Caco-2 (cell line): ENCODE measurements at regions of chr12 and their contacts with region 1.

Region 1: GRCh38 chr12:10212201-10213131 is at the start of gene GABARAPL1:
- DNase-seq: peak; percentile 97 to 98
- H3K4me3 ChIP-seq: peak within 1 kb of the TSS; percentile 92
- H3K4me3 Mint-ChIP-seq: peak within 1 kb of the TSS; percentile 80
- H3K27ac Mint-ChIP-seq: peak within 1 kb of the TSS; percentile 99
- H3K4me1 ChIP-seq: peaks cover 24% of the 10 kb centered on the region
- H3K4me1 Mint-ChIP-seq: peaks cover 28% of the 10 kb centered on the region
- H3K27me3 ChIP-seq: no peaks in the 10 kb centered on the region
- H3K27me3 Mint-ChIP-seq: no peaks in the 10 kb centered on the region
- CTCF ChIP-seq: no peak
- total RNA-seq, gene GABARAPL1: 106 TPM in 2 replicates

Region 2: DNA sequence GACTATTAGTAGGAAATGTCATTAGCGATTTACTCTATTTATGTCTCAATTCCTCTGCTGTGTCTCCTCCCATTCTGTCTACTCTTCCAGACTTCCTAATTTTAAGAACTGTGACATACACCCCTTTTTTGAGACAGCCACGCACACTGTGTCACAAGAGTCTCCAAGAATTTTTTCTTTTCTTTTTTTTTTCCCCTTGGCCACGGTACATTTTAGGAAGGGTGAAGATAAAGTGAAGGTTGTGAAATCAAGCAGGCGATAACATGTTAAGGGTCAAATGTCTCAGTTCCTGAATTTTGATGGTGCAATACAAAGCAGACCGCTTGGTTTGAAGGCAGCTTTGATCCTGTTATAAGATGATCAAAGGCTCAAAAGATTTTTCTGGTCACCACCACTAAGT is 44.9 kb before region 1 on chr12:
- CTCF ChIA-PET with region 1: no interaction called
- POLR2A ChIA-PET with region 1: interaction called, 12 read pairs
- intact Hi-C with region 1: loop called (anchors 1 kb)
- DNase-seq: peak; percentile 71 to 86
- H3K4me3 ChIP-seq: no peak overlapping the region
- H3K4me3 Mint-ChIP-seq: peak overlapping the region; percentile 25
- H3K27ac Mint-ChIP-seq: peak overlapping the region; percentile 73
- H3K4me1 ChIP-seq: peaks cover 76% of the 10 kb centered on the region
- H3K4me1 Mint-ChIP-seq: peaks cover 43% of the 10 kb centered on the region
- H3K27me3 ChIP-seq: no peaks in the 10 kb centered on the region
- H3K27me3 Mint-ChIP-seq: no peaks in the 10 kb centered on the region
- CTCF ChIP-seq: no peak

Region 3: DNA sequence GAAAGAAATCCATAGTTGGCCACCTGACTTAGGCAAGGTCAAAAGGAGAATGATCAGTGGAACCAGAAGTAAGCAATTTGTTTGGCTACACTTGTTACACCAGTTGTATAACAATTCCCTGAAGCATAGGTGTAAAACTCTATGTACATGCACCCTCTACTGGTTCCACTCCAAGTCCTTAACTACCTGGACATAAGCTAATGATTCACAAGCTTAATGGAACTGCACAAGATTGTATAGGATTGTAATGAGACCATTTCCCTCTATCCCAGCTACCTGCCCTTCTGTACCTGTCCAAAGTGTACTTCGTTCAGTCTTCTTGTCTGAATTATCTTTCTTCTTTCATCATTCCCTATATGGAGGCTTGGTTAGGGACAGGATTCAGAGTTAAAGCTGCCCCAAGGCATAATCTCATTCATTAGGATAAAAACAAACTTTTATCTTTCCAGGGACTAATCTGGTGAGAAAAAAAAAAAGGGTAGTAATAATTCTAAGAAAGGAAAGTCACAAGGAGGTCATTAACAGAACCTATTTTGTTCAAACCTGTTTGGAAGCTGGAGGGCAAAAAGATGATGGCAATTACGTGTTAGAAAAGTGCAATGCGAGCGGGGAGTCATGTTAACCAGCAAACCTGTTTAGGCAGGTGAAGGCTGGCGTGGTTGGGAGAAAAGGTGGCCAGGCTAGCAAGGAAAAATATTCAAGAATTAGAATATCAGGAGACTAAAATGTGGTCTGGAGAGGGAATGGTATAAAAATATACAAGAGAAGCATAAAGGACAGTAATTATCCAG is 36.4 kb before region 1 on chr12:
- CTCF ChIA-PET with region 1: interaction called, 6 read pairs
- POLR2A ChIA-PET with region 1: interaction called, 12 read pairs
- intact Hi-C with region 1: no loop called
- DNase-seq: peak; percentile 58 to 68
- H3K4me3 ChIP-seq: no peak overlapping the region
- H3K4me3 Mint-ChIP-seq: peak overlapping the region; percentile 18
- H3K27ac Mint-ChIP-seq: peak overlapping the region; percentile 77
- H3K4me1 ChIP-seq: peaks cover 91% of the 10 kb centered on the region
- H3K4me1 Mint-ChIP-seq: peaks cover 52% of the 10 kb centered on the region
- H3K27me3 ChIP-seq: no peaks in the 10 kb centered on the region
- H3K27me3 Mint-ChIP-seq: no peaks in the 10 kb centered on the region
- CTCF ChIP-seq: peak; percentile 21 to 46

Region 4: GRCh38 chr12:10196210-10196609 is 16.3 kb before region 1 on chr12:
- CTCF ChIA-PET with region 1: no interaction called
- POLR2A ChIA-PET with region 1: no interaction called
- intact Hi-C with region 1: no loop called
- DNase-seq: no peak
- H3K4me3 ChIP-seq: no peak overlapping the region
- H3K4me3 Mint-ChIP-seq: no peak overlapping the region
- H3K27ac Mint-ChIP-seq: no peak overlapping the region
- H3K4me1 ChIP-seq: peaks cover 15% of the 10 kb centered on the region
- H3K4me1 Mint-ChIP-seq: peaks cover 26% of the 10 kb centered on the region
- H3K27me3 ChIP-seq: no peaks in the 10 kb centered on the region
- H3K27me3 Mint-ChIP-seq: no peaks in the 10 kb centered on the region
- CTCF ChIP-seq: no peak

Region 5: DNA sequence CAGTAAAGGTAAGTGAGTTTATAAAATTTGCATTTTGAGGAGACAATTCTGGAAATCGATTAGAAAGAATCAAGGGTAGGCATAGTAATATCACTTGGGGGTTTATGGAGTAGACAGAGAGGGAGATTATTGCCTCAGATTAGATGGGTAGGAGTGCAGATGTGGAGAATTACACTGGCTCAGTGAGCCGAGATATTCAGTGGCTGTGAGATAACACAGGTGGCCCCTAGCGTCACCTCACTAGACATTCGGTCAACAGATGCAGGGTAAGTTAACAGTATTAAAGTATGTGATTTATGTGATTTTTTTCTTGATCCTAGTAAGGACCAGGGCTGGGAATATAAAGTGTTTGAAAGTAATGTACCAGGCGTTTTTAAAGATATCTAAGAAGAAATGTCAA is 55.6 kb after region 1 on chr12:
- CTCF ChIA-PET with region 1: no interaction called
- POLR2A ChIA-PET with region 1: no interaction called
- intact Hi-C with region 1: no loop called
- DNase-seq: no peak
- H3K4me3 ChIP-seq: no peak overlapping the region
- H3K4me3 Mint-ChIP-seq: no peak overlapping the region
- H3K27ac Mint-ChIP-seq: no peak overlapping the region
- H3K4me1 ChIP-seq: no peaks in the 10 kb centered on the region
- H3K4me1 Mint-ChIP-seq: no peaks in the 10 kb centered on the region
- H3K27me3 ChIP-seq: no peaks in the 10 kb centered on the region
- H3K27me3 Mint-ChIP-seq: peaks cover 3% of the 10 kb centered on the region
- CTCF ChIP-seq: no peak